ENCODE measurements at regions of chr17 and their contacts with region 1.

Region 1: DNA sequence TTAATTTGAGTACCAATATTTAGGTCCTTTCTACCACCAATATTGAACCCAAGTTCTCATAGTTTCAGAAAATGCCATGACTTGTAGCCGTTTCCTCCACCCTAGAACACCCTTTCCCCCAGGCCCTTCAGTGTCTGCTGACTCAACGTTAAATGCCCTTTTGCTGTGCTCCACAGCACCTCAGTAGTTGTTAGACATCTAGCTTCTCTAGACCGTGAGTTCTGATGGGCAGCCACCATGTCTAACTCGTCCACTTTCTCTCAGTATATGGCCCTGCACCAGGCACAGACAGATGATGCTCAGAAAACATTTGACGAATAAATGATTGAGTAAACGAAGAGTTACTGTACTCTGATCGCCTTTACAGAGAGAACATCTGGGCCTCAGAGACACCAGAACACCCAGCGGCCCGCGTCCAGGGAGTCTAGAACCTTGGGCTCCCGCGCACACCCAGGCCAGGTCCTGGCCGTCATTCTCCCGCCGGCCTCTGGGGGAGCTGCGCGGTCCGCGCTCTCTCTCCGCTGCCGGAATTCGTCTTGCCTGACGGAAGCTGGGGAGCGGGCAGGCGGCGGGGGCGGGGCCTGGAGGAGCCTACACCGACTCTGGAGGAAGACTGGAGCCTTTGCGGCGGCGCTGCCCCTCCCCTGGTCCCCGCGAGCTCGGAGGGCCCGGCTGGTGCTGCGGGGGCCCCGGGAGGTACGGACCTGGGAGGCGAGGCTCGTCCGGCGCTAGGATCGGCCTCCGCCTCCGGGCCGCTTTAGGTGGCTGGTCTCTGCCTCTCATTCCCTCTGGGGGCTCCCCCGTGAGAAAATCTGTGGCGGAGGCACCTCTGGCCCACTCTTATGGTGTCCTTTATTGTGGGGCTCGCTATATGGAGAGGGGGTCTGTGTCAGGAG is at the start of gene NKIRAS2:
- DNase-seq: peak; percentile 93
- H3K4me3 ChIP-seq: peak within 1 kb of the TSS; percentile 95
- H3K27ac ChIP-seq: peak within 1 kb of the TSS; percentile 24
- H3K4me1 ChIP-seq: peaks cover 49% of the 10 kb centered on the region
- CTCF ChIP-seq: peak; percentile 86
- total RNA-seq, gene NKIRAS2: 34.8 and 40.2 TPM in 2 replicates

Region 2: DNA sequence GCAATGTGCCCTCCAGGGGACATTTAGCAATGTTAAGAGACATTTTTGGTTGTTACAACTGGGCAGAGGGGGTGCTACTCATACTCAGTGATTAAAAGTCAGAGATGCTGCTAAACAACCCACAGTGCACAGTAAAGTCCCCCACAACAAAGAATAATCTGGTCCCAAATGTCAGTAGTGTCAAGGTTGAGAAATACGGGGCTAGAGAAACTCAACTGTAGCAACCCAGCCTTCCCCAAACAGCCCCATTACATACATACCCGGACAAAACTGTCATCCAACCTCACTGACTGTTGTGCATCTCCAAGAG is 22.9 kb before region 1 on chr17:
- CTCF ChIA-PET with region 1: interaction called, 3 read pairs
- POLR2A ChIA-PET with region 1: interaction called, 12 read pairs
- intact Hi-C with region 1: no loop called
- DNase-seq: no peak
- H3K4me3 ChIP-seq: no peak overlapping the region
- H3K27ac ChIP-seq: peak overlapping the region; percentile 80
- H3K4me1 ChIP-seq: peaks cover 39% of the 10 kb centered on the region
- CTCF ChIP-seq: no peak

Region 3: GRCh38 chr17:42101513-42102319 is 82.0 kb after region 1 on chr17:
- CTCF ChIA-PET with region 1: interaction called, 3 read pairs
- POLR2A ChIA-PET with region 1: no interaction called
- intact Hi-C with region 1: loop called (anchors 2 kb)
- DNase-seq: peak; percentile 68
- H3K4me3 ChIP-seq: no peak overlapping the region
- H3K27ac ChIP-seq: no peak overlapping the region
- H3K4me1 ChIP-seq: peaks cover 14% of the 10 kb centered on the region
- CTCF ChIP-seq: peak; percentile 98

Region 4: DNA sequence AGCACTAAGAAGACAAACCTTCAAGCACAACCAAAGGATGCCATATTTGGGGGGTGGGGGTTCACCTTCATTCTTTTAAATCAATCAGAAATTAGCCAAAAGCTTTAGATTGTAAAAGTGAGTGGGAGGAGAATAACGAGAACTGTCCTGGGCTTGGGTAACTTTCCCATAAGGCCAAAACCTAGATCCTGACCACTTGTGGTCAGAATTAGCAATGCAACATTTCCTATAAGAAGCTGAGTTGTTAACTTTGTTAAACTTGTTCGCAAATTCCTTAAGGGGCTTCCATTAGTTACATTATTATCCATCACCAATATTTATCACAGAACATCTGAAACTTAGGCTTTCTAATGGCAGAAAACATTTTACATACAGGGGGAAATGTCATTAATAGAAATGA is 231.4 kb after region 1 on chr17:
- CTCF ChIA-PET with region 1: no interaction called
- POLR2A ChIA-PET with region 1: no interaction called
- intact Hi-C with region 1: loop called (anchors 10 kb)
- DNase-seq: no peak
- H3K4me3 ChIP-seq: no peak overlapping the region
- H3K27ac ChIP-seq: no peak overlapping the region
- H3K4me1 ChIP-seq: peaks cover 15% of the 10 kb centered on the region
- CTCF ChIP-seq: peak; percentile 64

Region 5: DNA sequence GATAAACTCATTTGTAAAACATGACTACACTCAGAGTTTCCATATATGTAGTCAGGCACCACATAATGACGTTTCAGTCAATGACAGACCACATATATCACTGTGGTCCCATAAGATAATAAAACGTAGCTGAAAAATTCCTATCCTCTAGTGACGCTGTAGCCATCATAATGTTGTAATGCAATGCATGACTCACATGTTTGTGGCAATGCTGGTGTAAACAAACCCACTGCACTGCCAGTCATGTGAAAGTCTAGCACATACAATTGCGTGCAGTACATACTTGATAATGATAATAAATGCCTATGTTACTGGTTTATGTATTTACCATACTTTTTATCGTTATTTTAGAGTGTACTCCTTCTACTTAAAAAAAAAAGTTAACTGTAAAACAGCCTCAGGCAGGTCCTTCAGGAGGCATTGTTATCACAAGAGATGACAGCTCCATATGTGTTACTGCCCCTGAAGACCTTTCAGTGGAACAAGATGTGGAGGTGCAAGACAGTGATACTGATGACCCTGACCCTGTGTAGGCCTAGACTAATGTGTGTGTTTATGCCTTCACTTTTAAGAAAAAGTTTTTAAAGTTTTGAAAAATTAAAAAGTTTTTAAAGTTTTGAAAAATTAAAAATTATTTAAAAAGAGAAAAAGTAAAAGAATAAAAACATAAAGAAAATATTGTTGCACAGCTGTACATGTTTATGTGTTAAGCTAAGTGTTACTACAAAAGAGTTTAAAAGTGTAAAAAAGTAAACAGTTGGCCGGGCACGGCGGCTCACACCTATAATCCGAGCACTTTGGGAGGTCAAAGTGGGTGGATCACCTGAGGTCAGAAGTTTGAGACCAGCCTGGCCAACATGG is 247.4 kb after region 1 on chr17:
- CTCF ChIA-PET with region 1: no interaction called
- POLR2A ChIA-PET with region 1: no interaction called
- intact Hi-C with region 1: no loop called
- DNase-seq: no peak
- H3K4me3 ChIP-seq: no peak overlapping the region
- H3K27ac ChIP-seq: no peak overlapping the region
- H3K4me1 ChIP-seq: peaks cover 8% of the 10 kb centered on the region
- CTCF ChIP-seq: no peak